ENCODE measurements at regions of chr15 and their contacts with region 1.

Region 1: GRCh38 chr15:25438601-25439368 is at the start of gene UBE3A:
- DNase-seq: peak; percentile 89 to 95
- ATAC-seq: peak; percentile 92 to 98 (median 92)
- H3K4me3 ChIP-seq: peak within 1 kb of the TSS; percentile 75
- H3K4me3 Mint-ChIP-seq: peak within 1 kb of the TSS; percentile 94
- H3K27ac ChIP-seq: peak within 1 kb of the TSS; percentile 95
- H3K27ac Mint-ChIP-seq: peak within 1 kb of the TSS; percentile 87 to 88
- H3K4me1 ChIP-seq: peaks cover 11% of the 10 kb centered on the region
- H3K4me1 Mint-ChIP-seq: peaks cover 38 to 41% of the 10 kb centered on the region in 2 donors
- H3K27me3 ChIP-seq: no peaks in the 10 kb centered on the region
- H3K27me3 Mint-ChIP-seq: no peaks in the 10 kb centered on the region
- CTCF ChIP-seq: no peak
- total RNA-seq, gene UBE3A: 119 to 131 (median 122) TPM

Region 2: DNA sequence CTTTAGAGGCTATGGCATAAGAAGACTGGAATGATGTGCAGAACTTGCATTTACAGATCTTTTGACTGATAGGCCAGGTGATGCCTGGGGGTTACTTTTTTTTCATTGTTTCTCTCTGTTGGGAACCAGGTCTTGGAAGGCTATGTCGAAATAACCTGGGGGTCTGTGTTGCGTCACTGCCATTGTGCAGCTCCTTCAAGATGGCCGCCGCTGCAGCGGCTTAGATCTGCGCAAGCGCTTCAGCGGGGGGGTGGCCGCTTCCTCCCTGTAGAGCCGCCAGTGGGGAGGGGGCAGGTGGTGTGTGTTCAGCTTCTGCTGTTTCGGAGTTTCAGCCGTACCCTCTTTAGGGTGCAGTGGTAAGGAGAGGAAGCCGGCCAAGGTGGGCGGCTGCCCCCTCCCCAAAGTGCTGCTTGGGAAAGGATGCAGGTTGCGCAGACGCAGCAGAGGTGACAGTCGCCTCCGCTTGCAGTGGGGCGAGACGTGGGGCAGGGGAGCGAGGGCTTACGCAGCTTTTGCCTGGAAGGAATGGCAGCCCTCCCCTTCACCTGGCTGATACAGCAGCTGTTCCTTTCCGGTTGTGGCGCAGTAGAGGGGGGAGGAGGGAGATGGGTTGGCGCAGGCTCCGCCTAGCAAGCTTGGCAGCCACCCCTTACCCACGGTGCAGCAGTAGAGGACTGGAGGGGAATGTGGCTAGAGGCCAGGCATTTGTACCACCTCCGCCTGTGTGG is 482.5 kb before region 1 on chr15:
- intact Hi-C with region 1: loop called (anchors 10 kb)
- DNase-seq: peak; percentile 41 to 83
- ATAC-seq: peak; percentile 64 to 76 (median 75)
- H3K4me3 ChIP-seq: peak overlapping the region; percentile 78
- H3K4me3 Mint-ChIP-seq: peak overlapping the region; percentile 93
- H3K27ac ChIP-seq: peak overlapping the region; percentile 86
- H3K27ac Mint-ChIP-seq: peak overlapping the region; percentile 94 to 98
- H3K4me1 ChIP-seq: peaks cover 5% of the 10 kb centered on the region
- H3K4me1 Mint-ChIP-seq: peaks cover 23 to 31% of the 10 kb centered on the region in 2 donors
- H3K27me3 ChIP-seq: no peaks in the 10 kb centered on the region
- H3K27me3 Mint-ChIP-seq: peaks cover 0 to 3% of the 10 kb centered on the region in 2 donors
- CTCF ChIP-seq: no peak